B cell (primary cell): ENCODE measurements at regions of chr6 and their contacts with region 1.

Region 1: GRCh38 chr6:2841264-2842138 is at the start of gene SERPINB1:
- DNase-seq: peak; percentile 86
- ATAC-seq: peak; percentile 79
- H3K4me3 ChIP-seq: peak within 1 kb of the TSS; percentile 55 to 85 (median 72)
- H3K4me3 Mint-ChIP-seq: peak within 1 kb of the TSS; percentile 90
- H3K27ac ChIP-seq: peak within 1 kb of the TSS; percentile 61 to 87
- H3K27ac Mint-ChIP-seq: peak within 1 kb of the TSS; percentile 96
- H3K4me1 ChIP-seq: peaks cover 35 to 45% of the 10 kb centered on the region in 2 donors
- H3K4me1 Mint-ChIP-seq: peaks cover 50% of the 10 kb centered on the region
- H3K27me3 ChIP-seq: no peaks in the 10 kb centered on the region
- H3K27me3 Mint-ChIP-seq: no peaks in the 10 kb centered on the region
- CTCF ChIP-seq: no peak
- total RNA-seq, gene SERPINB1: 47.4 and 52.5 TPM in 2 replicates

Region 2: DNA sequence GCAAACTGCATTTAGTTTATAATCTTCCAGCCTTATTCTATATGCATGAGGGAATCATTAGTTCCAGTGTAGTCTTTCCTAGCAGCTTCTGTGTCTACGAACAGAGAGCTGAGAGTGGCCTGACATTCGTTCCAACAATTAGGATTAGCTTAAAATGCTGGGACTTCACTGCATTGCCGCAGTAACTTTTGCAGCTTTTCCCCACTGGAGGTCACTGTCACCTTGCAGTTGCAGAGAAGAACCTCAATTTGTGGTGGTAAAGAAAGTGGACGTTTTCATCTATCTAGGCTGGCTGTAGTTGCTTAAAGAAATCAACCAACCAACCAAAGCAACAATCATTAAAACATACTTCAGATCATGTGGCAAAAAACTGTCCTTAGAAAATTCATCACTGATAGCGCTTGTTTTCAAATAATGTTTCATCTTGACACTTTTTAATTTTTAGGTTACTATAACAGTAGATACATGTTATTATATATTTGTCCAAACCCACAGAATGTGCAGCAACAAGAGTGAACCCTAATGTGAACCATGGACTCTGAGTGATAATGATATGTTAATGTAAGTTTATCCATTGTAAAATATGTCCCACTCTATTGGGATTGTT is 103.0 kb before region 1 on chr6:
- CTCF ChIA-PET with region 1: interaction called, 11 read pairs
- POLR2A ChIA-PET with region 1: no interaction called
- intact Hi-C with region 1: no loop called
- DNase-seq: peak; percentile 62
- ATAC-seq: peak; percentile 31
- H3K4me3 ChIP-seq: no peak overlapping the region
- H3K4me3 Mint-ChIP-seq: no peak overlapping the region
- H3K27ac ChIP-seq: no peak overlapping the region
- H3K27ac Mint-ChIP-seq: no peak overlapping the region
- H3K4me1 ChIP-seq: peaks cover 3 to 4% of the 10 kb centered on the region in 2 donors
- H3K4me1 Mint-ChIP-seq: peaks cover 5% of the 10 kb centered on the region
- H3K27me3 ChIP-seq: no peaks in the 10 kb centered on the region
- H3K27me3 Mint-ChIP-seq: peaks cover 2% of the 10 kb centered on the region
- CTCF ChIP-seq: peak; percentile 71

Region 3: GRCh38 chr6:2765166-2765895 is 76.2 kb before region 1 on chr6 and contains the start of gene WRNIP1:
- CTCF ChIA-PET with region 1: interaction called, 4 read pairs
- POLR2A ChIA-PET with region 1: interaction called, 5 read pairs
- intact Hi-C with region 1: loop called (anchors 2 kb)
- DNase-seq: peak; percentile 98
- ATAC-seq: peak; percentile 87
- H3K4me3 ChIP-seq: peak within 1 kb of the TSS; percentile 66 to 90 (median 77)
- H3K4me3 Mint-ChIP-seq: peak within 1 kb of the TSS; percentile 98
- H3K27ac ChIP-seq: peak within 1 kb of the TSS; percentile 96 to 97
- H3K27ac Mint-ChIP-seq: peak within 1 kb of the TSS; percentile 100
- H3K4me1 ChIP-seq: peaks cover 25 to 33% of the 10 kb centered on the region in 2 donors
- H3K4me1 Mint-ChIP-seq: peaks cover 43% of the 10 kb centered on the region
- H3K27me3 ChIP-seq: no peaks in the 10 kb centered on the region
- H3K27me3 Mint-ChIP-seq: no peaks in the 10 kb centered on the region
- CTCF ChIP-seq: peak; percentile 60
- total RNA-seq, gene WRNIP1: 32.1 and 35.2 TPM in 2 replicates

Region 4: DNA sequence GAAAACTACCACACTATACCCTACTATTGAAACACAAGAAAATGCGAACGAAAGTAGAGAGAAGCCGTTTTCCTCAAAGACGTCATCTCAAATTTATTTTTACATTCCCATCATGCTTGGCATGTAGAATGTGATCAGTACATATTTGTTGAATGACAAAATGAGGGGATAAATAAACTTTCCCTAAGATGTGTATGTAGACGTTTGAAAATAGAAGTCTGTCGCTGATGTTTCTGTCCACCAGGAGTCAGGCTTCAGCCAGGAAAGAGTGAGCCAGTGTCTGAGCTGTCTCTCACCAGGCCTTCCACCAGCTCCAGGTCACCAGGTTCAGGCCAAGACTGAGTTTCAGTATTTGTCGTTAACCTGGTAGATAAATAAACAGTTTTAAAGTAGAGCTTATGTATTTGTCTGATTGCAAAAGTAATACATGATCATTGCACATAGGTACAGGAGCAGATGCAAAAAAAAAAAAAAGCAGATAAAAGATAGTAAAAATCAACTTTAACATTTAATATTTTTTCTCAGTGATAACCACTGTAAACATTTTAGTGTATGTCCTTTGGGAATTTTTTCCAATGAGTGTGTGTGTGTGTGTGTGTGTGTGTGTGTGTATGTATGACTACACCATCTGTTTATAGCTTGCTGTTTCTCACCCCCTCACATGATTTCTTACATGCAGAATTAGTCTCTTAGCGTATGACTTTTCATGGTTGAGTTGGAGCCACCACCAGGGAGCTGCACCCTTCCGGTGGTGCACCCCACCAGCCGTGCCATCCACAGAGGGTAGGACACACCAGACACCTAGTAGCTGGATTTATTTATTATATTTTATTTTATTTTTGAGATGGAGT is 50.2 kb before region 1 on chr6:
- CTCF ChIA-PET with region 1: interaction called, 57 read pairs
- POLR2A ChIA-PET with region 1: interaction called, 12 read pairs
- intact Hi-C with region 1: loop called (anchors 1 kb)
- DNase-seq: peak; percentile 78
- ATAC-seq: peak; percentile 83
- H3K4me3 ChIP-seq: no peak overlapping the region
- H3K4me3 Mint-ChIP-seq: peak overlapping the region; percentile 67
- H3K27ac ChIP-seq: peak overlapping the region in 1 of 2 donors; percentile 18
- H3K27ac Mint-ChIP-seq: peak overlapping the region; percentile 82
- H3K4me1 ChIP-seq: peaks cover 30 to 35% of the 10 kb centered on the region in 2 donors
- H3K4me1 Mint-ChIP-seq: peaks cover 36% of the 10 kb centered on the region
- H3K27me3 ChIP-seq: no peaks in the 10 kb centered on the region
- H3K27me3 Mint-ChIP-seq: no peaks in the 10 kb centered on the region
- CTCF ChIP-seq: peak; percentile 82

Region 5: GRCh38 chr6:2891768-2892170 is 50.3 kb after region 1 on chr6:
- CTCF ChIA-PET with region 1: interaction called, 73 read pairs
- POLR2A ChIA-PET with region 1: no interaction called
- intact Hi-C with region 1: no loop called
- DNase-seq: peak; percentile 87
- ATAC-seq: peak; percentile 90
- H3K4me3 ChIP-seq: peak overlapping the region in 4 of 5 experiments; percentile 5 to 34 (median 16)
- H3K4me3 Mint-ChIP-seq: peak overlapping the region; percentile 86
- H3K27ac ChIP-seq: peak overlapping the region; percentile 59 to 76
- H3K27ac Mint-ChIP-seq: peak overlapping the region; percentile 94
- H3K4me1 ChIP-seq: peaks cover 30 to 32% of the 10 kb centered on the region in 2 donors
- H3K4me1 Mint-ChIP-seq: peaks cover 59% of the 10 kb centered on the region
- H3K27me3 ChIP-seq: no peaks in the 10 kb centered on the region
- H3K27me3 Mint-ChIP-seq: no peaks in the 10 kb centered on the region
- CTCF ChIP-seq: no peak

Region 6: DNA sequence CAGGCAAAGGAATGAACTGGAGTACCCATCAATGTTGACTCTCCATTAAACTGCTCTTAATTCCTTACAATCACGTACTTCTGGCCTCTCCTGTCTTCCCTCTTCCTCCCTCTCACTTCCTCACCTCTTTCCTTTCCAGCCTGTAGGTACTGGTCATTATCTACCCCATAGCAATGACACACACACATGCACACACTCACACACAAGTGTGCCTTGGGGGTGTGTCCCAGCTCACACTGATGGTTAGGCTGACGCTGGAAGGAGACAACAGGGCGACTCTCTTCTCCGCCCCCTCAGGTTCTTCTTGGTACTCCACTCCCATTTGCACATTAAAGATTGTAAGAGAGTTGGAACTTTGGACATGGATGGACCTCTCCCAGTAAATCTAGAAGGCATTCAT is 75.6 kb after region 1 on chr6:
- CTCF ChIA-PET with region 1: interaction called, 165 read pairs
- POLR2A ChIA-PET with region 1: interaction called, 10 read pairs
- intact Hi-C with region 1: no loop called
- DNase-seq: no peak
- ATAC-seq: peak; percentile 56
- H3K4me3 ChIP-seq: no peak overlapping the region
- H3K4me3 Mint-ChIP-seq: no peak overlapping the region
- H3K27ac ChIP-seq: no peak overlapping the region
- H3K27ac Mint-ChIP-seq: no peak overlapping the region
- H3K4me1 ChIP-seq: no peaks in the 10 kb centered on the region
- H3K4me1 Mint-ChIP-seq: peaks cover 2% of the 10 kb centered on the region
- H3K27me3 ChIP-seq: no peaks in the 10 kb centered on the region
- H3K27me3 Mint-ChIP-seq: no peaks in the 10 kb centered on the region
- CTCF ChIP-seq: peak; percentile 45

Region 7: GRCh38 chr6:3162565-3163247 is 321.2 kb after region 1 on chr6:
- CTCF ChIA-PET with region 1: no interaction called
- POLR2A ChIA-PET with region 1: no interaction called
- intact Hi-C with region 1: loop called (anchors 5 kb)
- DNase-seq: peak; percentile 81
- ATAC-seq: peak; percentile 79
- H3K4me3 ChIP-seq: peak overlapping the region in 4 of 5 experiments; percentile 71 to 81 (median 78)
- H3K4me3 Mint-ChIP-seq: peak overlapping the region; percentile 83
- H3K27ac ChIP-seq: peak overlapping the region in 1 of 2 donors; percentile 51
- H3K27ac Mint-ChIP-seq: peak overlapping the region; percentile 71
- H3K4me1 ChIP-seq: peaks cover 10 to 18% of the 10 kb centered on the region in 2 donors
- H3K4me1 Mint-ChIP-seq: peaks cover 23% of the 10 kb centered on the region
- H3K27me3 ChIP-seq: peaks cover 0 to 10% (median 0%) of the 10 kb centered on the region in 4 experiments
- H3K27me3 Mint-ChIP-seq: peaks cover 4% of the 10 kb centered on the region
- CTCF ChIP-seq: no peak

Region 8: GRCh38 chr6:4291453-4292403 is 1450.2 kb after region 1 on chr6:
- CTCF ChIA-PET with region 1: no interaction called
- POLR2A ChIA-PET with region 1: no interaction called
- intact Hi-C with region 1: no loop called
- DNase-seq: no peak
- ATAC-seq: no peak
- H3K4me3 ChIP-seq: no peak overlapping the region
- H3K4me3 Mint-ChIP-seq: no peak overlapping the region
- H3K27ac ChIP-seq: no peak overlapping the region
- H3K27ac Mint-ChIP-seq: no peak overlapping the region
- H3K4me1 ChIP-seq: no peaks in the 10 kb centered on the region
- H3K4me1 Mint-ChIP-seq: no peaks in the 10 kb centered on the region
- H3K27me3 ChIP-seq: peaks cover 0 to 4% (median 0%) of the 10 kb centered on the region in 4 experiments
- H3K27me3 Mint-ChIP-seq: peaks cover 24% of the 10 kb centered on the region
- CTCF ChIP-seq: no peak